PC-3 (cell line): ENCODE measurements at regions of chr2 and their contacts with region 1.

Region 1: DNA sequence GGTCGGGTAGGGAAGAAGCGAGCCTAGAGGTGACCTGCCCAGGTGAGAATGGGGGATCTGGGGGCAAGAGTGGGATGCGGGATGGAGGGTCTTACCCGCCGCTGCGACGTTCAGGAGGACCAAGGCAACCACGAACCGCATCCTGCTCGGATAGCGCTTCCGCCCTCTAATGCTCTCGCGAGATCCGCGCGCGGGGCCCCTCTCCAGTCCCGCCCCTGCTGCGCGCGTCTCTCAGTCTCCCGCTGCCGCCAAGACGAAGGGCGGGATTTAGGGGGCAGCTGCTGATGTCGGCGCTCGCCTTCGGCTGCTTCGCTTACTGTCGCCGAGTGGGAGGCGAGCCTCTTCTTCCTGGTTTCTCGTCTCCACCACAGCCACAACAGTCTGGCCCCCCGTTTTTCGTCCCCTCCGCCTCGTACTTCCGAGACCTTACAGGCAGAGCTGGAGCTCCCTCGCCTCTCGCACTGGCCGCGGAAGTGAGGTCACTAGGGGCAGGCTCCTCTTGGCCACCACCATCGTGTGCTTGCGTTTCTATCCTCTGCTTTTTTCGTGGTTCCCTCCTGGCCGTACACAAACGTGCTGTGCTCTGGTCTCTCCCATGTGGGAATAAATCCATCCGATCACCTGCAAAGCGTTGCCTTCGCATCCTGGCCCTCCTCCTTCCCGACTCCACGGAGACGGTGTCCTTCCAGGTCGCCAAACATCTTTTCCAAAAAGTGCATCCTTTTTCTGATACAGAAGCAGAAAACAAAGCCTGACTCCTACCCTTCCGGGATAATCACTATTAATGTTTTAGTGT is at the start of gene TGOLN2:
- DNase-seq: peak; percentile 93
- ATAC-seq: peak; percentile 96
- H3K4me3 ChIP-seq: peak within 1 kb of the TSS; percentile 92
- H3K27ac ChIP-seq: peak within 1 kb of the TSS; percentile 70
- H3K4me1 ChIP-seq: peaks cover 24% of the 10 kb centered on the region
- H3K27me3 ChIP-seq: no peaks in the 10 kb centered on the region
- CTCF ChIP-seq: no peak
- total RNA-seq, gene TGOLN2: 48.9 and 67.3 TPM in 2 replicates

Region 2: DNA sequence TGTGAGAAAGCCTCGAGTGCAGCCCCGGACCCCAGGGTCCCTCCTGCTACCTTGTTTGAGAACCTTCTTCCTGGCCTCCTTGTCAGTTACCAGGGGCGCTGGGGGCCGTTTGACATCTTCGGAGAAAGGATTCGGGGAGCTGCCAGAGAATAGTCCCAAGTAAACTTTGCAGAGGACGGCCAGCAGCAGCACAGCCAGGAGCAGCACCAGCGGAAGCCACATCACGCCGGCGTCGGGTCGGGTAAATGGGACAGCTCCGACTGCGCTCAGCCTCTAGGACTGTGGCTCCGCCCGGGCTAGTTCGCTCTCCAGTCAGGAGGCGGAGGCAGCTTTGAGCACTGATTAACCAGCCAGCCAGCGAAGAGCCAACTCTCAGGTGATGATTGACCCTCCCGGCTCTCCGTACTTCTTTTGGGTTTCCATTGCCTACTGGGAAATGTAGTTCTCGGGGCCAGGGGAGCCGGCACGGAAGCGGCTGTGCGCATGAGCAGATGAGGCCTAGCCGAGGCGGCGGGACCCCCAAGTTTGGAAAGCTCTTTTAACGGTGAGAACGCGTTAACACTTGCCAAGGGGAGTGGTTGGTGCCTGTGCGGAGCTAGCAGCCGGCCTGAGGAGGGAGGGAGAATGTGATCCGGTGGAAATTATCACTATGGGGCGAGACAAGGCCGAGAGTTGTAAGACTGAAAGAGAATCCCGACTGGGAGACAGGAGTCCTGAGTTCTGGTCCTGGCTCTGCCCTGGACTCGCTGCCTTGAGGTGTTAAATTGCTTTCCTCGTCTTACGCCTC is 26.5 kb after region 1 on chr2 and contains the starts of genes ELMOD3 and RETSAT:
- CTCF ChIA-PET with region 1: no interaction called
- POLR2A ChIA-PET with region 1: no interaction called
- intact Hi-C with region 1: no loop called
- DNase-seq: peak; percentile 99
- ATAC-seq: peak; percentile 97
- H3K4me3 ChIP-seq: peak within 1 kb of the TSS; percentile 84
- H3K27ac ChIP-seq: peak within 1 kb of the TSS; percentile 61
- H3K4me1 ChIP-seq: peaks cover 32% of the 10 kb centered on the region
- H3K27me3 ChIP-seq: no peaks in the 10 kb centered on the region
- CTCF ChIP-seq: no peak
- total RNA-seq, gene ELMOD3: 16.7 and 19.0 TPM in 2 replicates
- total RNA-seq, gene RETSAT: 39.1 and 50.8 TPM in 2 replicates

Region 3: DNA sequence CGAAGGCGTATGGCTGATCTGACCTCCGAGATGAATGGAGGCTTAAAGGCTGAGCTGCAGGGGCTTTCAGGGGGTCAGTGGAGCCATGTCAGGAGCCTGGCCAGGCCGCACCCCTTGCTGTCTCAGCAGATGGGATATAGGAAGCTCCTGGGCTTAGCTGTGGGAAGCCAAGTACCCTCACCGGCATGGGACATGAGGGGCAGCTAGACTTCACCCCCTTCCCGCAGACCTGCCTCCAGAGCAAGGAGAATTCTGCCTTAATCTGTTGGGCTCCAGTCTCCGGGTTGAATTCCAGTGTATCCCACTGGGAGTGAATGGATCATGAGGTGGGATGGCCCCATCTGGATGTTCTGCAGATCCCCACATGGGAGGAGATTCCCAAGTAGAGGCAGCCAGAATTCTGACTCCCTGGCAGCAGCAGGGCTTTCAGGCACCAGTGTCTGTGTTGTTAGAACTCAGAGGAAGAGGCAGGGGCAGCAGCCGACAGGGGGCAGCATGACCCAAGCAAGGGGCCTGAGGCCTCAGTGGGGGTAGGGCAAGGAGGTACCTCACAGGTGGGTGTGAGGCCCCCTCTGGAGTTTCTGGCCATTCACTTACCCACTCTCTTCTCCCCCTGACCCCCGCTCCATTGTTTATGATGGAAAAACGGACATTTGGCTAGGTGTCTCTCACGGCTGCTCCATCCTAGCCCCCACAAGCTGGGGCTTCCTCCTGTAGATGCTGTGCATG is 63.1 kb after region 1 on chr2:
- CTCF ChIA-PET with region 1: no interaction called
- POLR2A ChIA-PET with region 1: no interaction called
- intact Hi-C with region 1: no loop called
- DNase-seq: peak; percentile 58
- ATAC-seq: peak; percentile 66
- H3K4me3 ChIP-seq: no peak overlapping the region
- H3K27ac ChIP-seq: no peak overlapping the region
- H3K4me1 ChIP-seq: peaks cover 2% of the 10 kb centered on the region
- H3K27me3 ChIP-seq: no peaks in the 10 kb centered on the region
- CTCF ChIP-seq: peak; percentile 78

Region 4: DNA sequence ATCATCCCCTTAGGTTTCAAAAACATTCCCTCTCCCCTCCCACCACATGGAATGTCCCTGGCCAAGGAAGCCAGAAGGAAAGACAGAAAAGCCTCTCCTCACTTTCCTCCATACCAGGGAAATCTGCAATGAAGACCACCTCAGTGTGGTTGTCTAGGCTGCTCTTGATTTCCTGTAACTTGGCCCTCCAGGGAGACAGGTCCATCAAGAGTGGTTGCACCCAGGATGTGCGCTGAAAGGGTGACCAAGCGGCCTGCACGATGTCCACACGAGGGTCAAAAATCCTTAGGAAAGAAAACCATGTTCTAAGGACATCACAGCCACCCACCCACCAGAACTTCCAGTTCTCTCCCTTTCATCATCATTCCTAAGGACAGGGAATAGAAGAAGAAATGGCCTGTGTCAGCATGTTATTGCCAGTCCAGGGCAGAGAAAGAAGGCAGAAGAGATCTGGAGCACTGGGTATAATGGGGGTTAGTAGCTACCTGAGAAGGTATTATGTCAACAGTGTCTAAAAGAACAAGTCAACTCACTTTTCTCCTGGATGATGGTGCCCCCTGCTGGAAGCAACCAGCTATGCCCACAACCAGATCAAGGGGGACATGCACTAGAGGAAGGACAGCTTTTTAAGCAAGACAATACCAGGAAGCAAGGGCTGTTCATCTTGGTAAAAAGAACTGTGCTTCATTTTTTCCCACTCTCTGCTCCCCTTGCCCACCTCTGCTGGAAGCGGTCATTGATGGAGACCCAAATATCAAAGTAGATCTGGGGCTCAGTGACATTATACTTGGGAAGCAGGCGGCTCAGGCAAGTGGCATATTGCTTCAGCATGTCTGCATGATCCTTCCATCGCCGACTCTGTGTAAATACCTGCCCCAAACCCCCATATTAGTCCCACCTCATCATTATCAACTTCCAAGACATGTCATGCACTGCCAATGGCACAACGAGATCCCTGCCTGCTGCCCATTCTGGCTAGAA is 224.0 kb after region 1 on chr2:
- CTCF ChIA-PET with region 1: no interaction called
- POLR2A ChIA-PET with region 1: no interaction called
- intact Hi-C with region 1: loop called (anchors 1 kb)
- DNase-seq: peak; percentile 92
- ATAC-seq: peak; percentile 41
- H3K4me3 ChIP-seq: no peak overlapping the region
- H3K27ac ChIP-seq: no peak overlapping the region
- H3K4me1 ChIP-seq: peaks cover 16% of the 10 kb centered on the region
- H3K27me3 ChIP-seq: no peaks in the 10 kb centered on the region
- CTCF ChIP-seq: peak; percentile 96